Activated B cell treated with CpG ODN at 0.5 μM for 24 hours (primary cell): ENCODE measurements at regions of chr5 and their contacts with region 1.

Region 1: GRCh38 chr5:122774861-122775549 is at the start of gene SNX2:
- DNase-seq: peak; percentile 96
- ATAC-seq: peak; percentile 86
- H3K4me3 Mint-ChIP-seq: peak within 1 kb of the TSS; percentile 97
- H3K27ac Mint-ChIP-seq: peak within 1 kb of the TSS; percentile 96
- H3K4me1 Mint-ChIP-seq: peaks cover 39% of the 10 kb centered on the region
- H3K27me3 Mint-ChIP-seq: no peaks in the 10 kb centered on the region
- CTCF ChIP-seq: no peak
- total RNA-seq, gene SNX2: 145 and 146 TPM in 2 replicates

Region 2: GRCh38 chr5:121968910-121969607 is 805.9 kb before region 1 on chr5:
- CTCF ChIA-PET with region 1: no interaction called
- POLR2A ChIA-PET with region 1: no interaction called
- intact Hi-C with region 1: loop called (anchors 10 kb)
- DNase-seq: no peak
- ATAC-seq: no peak
- H3K4me3 Mint-ChIP-seq: no peak overlapping the region
- H3K27ac Mint-ChIP-seq: no peak overlapping the region
- H3K4me1 Mint-ChIP-seq: peaks cover 39% of the 10 kb centered on the region
- H3K27me3 Mint-ChIP-seq: no peaks in the 10 kb centered on the region
- CTCF ChIP-seq: no peak

Region 3: DNA sequence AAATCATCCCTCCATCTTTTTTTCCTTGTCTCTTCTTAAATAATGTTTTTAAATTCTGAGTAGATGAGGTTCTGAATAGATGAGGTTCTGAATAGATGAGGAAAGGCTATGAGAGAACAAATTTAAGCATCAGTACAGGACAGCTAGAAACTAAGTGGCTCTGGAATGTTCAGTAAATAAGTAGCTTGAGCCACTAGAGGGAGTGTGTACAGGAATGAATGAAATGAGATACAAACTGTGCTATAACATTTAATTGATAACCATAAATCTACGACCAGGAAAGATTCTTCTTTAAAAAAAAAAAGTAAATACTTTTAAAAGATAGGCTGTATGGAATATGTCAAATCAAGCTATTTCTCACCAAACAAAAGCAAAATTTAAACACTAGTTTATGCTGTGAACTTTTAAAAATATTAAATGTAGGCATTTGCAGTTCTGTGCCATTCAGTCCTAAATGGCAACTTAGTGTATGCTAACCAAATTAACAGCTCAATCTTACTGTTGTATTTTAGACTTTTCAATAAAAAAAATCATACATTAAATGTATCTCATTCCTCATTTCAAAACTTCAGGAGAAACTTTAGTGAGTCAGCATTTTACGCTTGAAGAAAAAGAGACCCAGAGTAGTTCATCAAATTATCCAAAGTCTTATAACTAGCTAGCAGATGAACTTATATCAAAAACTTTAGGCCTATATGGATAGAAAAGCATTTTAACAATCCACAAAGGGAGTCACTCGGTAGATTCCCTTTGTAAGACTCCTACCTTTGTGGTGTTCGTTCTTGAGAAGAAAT is 70.6 kb before region 1 on chr5:
- CTCF ChIA-PET with region 1: interaction called, 30 read pairs
- POLR2A ChIA-PET with region 1: interaction called, 84 read pairs
- intact Hi-C with region 1: loop called (anchors 1 kb)
- DNase-seq: no peak
- ATAC-seq: no peak
- H3K4me3 Mint-ChIP-seq: peak overlapping the region; percentile 7
- H3K27ac Mint-ChIP-seq: peak overlapping the region; percentile 94
- H3K4me1 Mint-ChIP-seq: peaks cover 63% of the 10 kb centered on the region
- H3K27me3 Mint-ChIP-seq: no peaks in the 10 kb centered on the region
- CTCF ChIP-seq: no peak

Region 4: DNA sequence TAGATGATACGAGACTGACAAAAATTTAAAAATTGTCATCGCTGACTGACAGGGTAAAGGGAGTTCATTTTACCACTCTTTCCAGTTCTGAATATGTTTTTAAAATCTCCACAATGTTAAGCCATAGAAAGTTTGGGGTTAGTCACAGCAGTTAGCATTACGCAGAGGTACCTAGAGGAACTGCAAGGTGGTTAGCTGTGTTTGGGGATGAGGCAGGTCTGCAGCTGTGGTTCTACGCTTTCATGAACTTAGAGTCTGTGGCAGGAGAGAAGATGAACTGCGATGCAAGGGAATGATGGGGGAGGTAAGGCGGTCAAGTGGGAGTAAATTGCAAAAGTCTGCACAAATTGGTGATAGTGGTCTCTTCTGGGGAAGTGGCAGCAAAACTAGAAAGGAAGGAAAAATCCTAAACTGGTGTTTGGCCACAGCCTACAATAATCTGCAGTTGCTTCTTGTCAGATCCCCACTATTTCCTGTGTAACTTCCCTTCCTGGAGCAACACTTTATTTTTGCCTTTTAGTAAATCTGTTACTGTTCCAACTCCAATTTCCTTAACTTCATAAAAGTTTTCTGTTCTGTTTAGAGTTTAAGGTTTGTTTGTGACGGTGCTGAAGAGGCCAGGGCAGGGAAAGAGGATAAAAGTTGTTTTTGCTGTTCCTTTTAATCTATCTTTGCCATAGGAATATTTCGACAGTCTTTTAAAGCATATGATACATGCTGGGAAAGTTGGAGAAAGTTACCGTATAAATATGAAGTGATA is 38.7 kb before region 1 on chr5:
- CTCF ChIA-PET with region 1: no interaction called
- POLR2A ChIA-PET with region 1: interaction called, 4 read pairs
- intact Hi-C with region 1: loop called (anchors 5 kb)
- DNase-seq: no peak
- ATAC-seq: peak; percentile 95
- H3K4me3 Mint-ChIP-seq: peak overlapping the region; percentile 9
- H3K27ac Mint-ChIP-seq: peak overlapping the region; percentile 26
- H3K4me1 Mint-ChIP-seq: peaks cover 16% of the 10 kb centered on the region
- H3K27me3 Mint-ChIP-seq: no peaks in the 10 kb centered on the region
- CTCF ChIP-seq: no peak

Region 5: GRCh38 chr5:122788996-122789395 is 14.0 kb after region 1 on chr5:
- CTCF ChIA-PET with region 1: no interaction called
- POLR2A ChIA-PET with region 1: interaction called, 11 read pairs
- intact Hi-C with region 1: loop called (anchors 1 kb)
- DNase-seq: no peak
- ATAC-seq: no peak
- H3K4me3 Mint-ChIP-seq: no peak overlapping the region
- H3K27ac Mint-ChIP-seq: peak overlapping the region; percentile 69
- H3K4me1 Mint-ChIP-seq: peaks cover 75% of the 10 kb centered on the region
- H3K27me3 Mint-ChIP-seq: no peaks in the 10 kb centered on the region
- CTCF ChIP-seq: no peak

Region 6: GRCh38 chr5:122845229-122846050 is 70.4 kb after region 1 on chr5 and contains the start of gene SNX24:
- CTCF ChIA-PET with region 1: interaction called, 3 read pairs
- POLR2A ChIA-PET with region 1: interaction called, 12 read pairs
- intact Hi-C with region 1: loop called (anchors 1 kb)
- DNase-seq: peak; percentile 72
- ATAC-seq: peak; percentile 82
- H3K4me3 Mint-ChIP-seq: peak within 1 kb of the TSS; percentile 90
- H3K27ac Mint-ChIP-seq: peak within 1 kb of the TSS; percentile 82
- H3K4me1 Mint-ChIP-seq: peaks cover 36% of the 10 kb centered on the region
- H3K27me3 Mint-ChIP-seq: no peaks in the 10 kb centered on the region
- CTCF ChIP-seq: no peak
- total RNA-seq, gene SNX24: 8.2 and 8.5 TPM in 2 replicates